ENCODE measurements at regions of chr1 and their contacts with region 1.

Region 1: GRCh38 chr1:24391882-24392603 is 21.5 kb downstream of the STPG1 start:
- DNase-seq: no peak
- H3K4me3 ChIP-seq: no peak overlapping the region
- CTCF ChIP-seq: peak; percentile 78

Region 2: GRCh38 chr1:24070821-24071393 is 321.1 kb before region 1 on chr1:
- CTCF ChIA-PET with region 1: interaction called, 20 read pairs
- POLR2A ChIA-PET with region 1: no interaction called
- DNase-seq: no peak
- H3K4me3 ChIP-seq: no peak overlapping the region
- CTCF ChIP-seq: peak; percentile 87

Region 3: GRCh38 chr1:24216276-24217074 is 175.6 kb before region 1 on chr1:
- CTCF ChIA-PET with region 1: interaction called, 177 read pairs
- POLR2A ChIA-PET with region 1: no interaction called
- DNase-seq: no peak
- H3K4me3 ChIP-seq: no peak overlapping the region
- CTCF ChIP-seq: no peak

Region 4: DNA sequence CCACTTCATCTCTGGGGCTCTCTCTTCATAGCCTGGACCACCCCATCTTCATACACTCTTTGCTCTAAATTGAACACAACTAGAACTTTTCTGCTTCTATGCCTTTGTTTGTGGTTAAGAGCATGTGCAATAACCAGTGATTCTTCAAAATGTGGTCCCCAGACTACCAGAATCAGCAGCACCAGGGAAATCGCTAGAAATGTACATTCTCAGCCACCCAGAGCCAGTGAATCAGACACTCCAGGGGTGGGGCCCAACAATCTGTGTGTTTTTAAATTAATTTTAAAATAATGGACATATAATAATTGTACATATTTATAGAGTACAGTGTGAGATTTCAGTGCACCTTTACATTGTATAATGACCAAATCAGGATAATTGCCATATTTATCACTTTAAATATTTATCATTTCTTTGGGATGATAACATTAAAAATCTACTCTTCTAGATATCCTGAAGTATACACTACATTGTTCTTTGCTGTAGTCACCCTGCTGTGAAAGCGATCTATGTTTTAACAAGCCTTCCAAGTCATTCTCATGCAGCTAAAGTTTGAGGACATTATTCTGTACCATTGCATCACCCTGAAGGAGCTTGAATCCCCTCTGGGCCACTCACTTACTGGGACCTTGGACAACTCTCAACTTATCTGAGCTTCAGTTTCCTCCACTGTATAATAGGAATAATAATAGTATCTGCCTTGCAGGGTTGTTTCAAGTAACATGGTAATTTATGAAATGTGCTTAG is 62.1 kb before region 1 on chr1:
- CTCF ChIA-PET with region 1: interaction called, 19 read pairs
- POLR2A ChIA-PET with region 1: no interaction called
- DNase-seq: peak; percentile 40
- H3K4me3 ChIP-seq: no peak overlapping the region
- CTCF ChIP-seq: no peak

Region 5: DNA sequence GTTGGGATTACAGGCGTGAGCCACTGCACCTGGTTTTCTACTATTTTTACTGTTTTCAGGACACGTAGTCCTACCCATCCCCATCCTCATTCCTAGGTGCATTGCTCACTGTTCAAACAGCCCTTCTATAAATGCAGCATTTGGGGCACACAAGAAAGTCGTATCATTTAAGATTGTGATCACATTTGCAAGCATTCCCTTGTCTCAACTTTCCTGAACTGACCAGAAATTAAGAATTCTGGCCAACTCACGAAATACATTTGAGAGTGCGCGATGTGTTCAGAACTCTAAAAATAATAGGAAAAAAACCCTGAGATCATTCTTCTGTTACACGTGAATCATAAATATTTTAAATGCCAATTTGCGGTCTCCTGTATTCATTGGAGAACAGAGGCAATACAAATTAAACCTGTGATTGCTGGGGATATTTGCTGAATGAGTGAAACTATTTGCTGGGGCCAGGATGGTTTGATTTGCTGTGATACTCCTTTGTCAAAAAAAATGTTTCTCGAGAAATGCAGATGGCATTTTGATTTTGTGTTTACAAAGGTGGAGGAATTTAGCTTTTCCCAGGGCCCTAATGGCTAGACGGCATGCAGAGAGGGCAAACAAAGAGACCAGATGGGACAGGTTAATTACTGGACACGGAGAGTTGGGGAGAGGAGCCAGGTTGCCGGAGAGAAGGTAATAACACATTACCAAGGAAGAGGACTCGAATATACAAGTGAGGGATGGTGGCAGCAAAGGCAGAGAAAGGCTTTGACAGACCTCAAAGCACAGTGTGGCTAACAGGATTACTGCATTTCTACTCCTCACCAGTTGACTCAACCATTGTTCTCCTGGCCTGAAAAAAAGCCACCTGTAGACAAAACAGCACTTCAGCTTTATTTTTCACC is 16.9 kb before region 1 on chr1:
- CTCF ChIA-PET with region 1: interaction called, 69 read pairs
- POLR2A ChIA-PET with region 1: no interaction called
- DNase-seq: no peak
- H3K4me3 ChIP-seq: no peak overlapping the region
- CTCF ChIP-seq: no peak

Region 6: DNA sequence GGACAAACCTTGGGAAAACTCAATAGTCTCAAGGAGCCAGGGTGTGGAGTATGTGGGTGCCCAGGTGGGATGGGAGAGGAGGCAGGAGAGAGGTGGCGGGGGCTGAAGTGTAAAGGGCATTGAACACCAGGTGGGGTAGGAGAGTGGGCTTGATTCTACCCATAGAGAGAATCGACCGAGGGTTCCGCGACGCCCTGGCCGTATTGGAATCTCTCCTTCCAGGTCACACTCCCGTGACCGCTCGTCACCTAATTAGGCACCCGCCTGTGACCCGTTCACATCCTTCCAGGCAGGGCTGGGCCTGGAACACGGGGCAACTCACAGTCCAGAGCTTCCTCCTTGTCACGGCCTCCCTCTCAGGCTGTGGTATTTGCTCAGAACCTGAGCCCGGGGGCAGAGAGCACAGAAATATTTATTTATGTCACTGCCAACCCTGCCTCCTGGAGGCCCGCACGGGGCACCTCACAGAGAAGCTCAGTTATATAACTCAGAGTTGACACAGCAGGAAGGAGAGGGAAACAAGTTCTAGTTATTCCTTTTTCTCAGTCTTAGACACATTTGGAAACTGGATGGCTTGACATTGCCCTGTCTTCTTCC is 175.8 kb after region 1 on chr1:
- CTCF ChIA-PET with region 1: no interaction called
- POLR2A ChIA-PET with region 1: no interaction called
- DNase-seq: no peak
- H3K4me3 ChIP-seq: no peak overlapping the region
- CTCF ChIP-seq: no peak

Region 7: DNA sequence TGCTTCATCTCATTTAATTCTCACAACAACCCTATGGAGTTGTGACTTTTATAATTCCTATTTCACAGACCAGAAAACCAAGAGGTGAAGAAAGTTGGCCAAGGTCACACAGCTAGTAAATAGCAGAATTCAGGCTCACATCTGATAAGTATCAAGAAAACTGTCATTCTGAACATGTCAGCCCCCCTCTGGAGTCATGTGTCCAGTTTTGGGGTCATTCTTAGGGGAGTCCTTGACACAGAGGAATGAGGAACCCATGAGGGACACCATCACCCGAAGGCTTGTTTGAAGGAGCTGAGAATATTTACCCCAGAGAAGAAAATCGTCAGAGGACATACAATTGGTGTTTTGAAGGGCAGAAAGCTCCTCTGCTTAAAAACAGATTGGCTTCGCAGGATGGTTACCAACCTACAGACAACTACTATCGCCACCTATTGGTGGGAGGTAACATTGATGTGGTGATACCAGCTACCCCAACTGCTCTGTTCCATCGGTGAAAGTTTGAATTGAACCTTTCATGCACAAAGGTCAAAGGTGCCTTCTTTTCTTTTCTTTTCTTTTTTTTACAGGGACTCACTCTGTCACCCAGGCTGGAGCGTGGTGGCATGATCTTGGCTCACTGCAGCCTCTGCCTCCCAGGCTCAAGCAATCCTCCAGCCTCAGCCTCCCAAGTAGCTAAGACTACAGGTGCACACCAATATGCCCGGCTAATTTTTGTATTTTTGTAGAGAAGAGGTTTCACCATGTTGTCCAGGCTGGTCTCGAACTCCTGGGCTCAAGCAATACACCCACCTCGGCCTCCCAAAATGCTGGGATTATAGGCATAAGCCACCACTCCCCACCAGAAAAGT is 195.2 kb after region 1 on chr1:
- CTCF ChIA-PET with region 1: interaction called, 52 read pairs
- POLR2A ChIA-PET with region 1: no interaction called
- DNase-seq: peak; percentile 9
- H3K4me3 ChIP-seq: no peak overlapping the region
- CTCF ChIP-seq: peak; percentile 65

Measured in AG04449 (cell line).